K562 (cell line): ENCODE measurements at regions of chr15 and their contacts with region 1.

Region 1: DNA sequence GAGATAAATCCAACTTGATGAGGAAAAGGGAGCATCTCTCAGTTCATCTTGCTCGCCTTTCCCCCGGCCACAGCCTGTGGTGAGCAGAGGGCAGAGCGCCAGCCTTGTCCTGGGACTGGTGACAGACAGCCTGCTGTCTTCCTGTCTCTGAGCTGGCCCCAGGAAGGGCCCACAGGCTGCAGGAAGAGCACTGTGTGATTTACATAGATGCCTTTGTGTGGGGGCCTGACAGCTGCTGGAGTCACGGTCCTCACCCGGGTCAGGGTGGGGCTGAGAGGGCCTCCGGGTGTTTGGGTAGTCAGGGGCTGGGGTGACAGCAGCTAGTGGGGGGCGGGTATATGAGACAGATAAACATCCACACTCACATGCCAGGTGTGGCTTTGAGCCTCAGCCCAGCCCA is 29.3 kb downstream of the PLA2G4D start:
- DNase-seq: no peak
- ATAC-seq: no peak
- H3K4me3 ChIP-seq: no peak overlapping the region
- H3K27ac ChIP-seq: no peak overlapping the region
- H3K4me1 ChIP-seq: peaks cover 0 to 5% of the 10 kb centered on the region in 2 experiments; a peak in 1 of 5 replicates
- H3K27me3 ChIP-seq: peaks cover 7 to 71% of the 10 kb centered on the region in 2 experiments
- CTCF ChIP-seq: no peak
- EP300 ChIP-seq: no peak
- POLR2A ChIP-seq: no peak
- RAD21 ChIP-seq: no peak

Region 2: GRCh38 chr15:42084460-42085235 is 19.6 kb after region 1 on chr15:
- CTCF ChIA-PET with region 1: interaction called, 18 read pairs
- POLR2A ChIA-PET with region 1: no interaction called
- in situ Hi-C with region 1: no loop called
- intact Hi-C with region 1: loop called (anchors 1 kb)
- DNase-seq: peak; percentile 77 to 83 (median 80)
- ATAC-seq: peak; percentile 96
- H3K4me3 ChIP-seq: no peak overlapping the region
- H3K27ac ChIP-seq: no peak overlapping the region
- H3K4me1 ChIP-seq: peaks cover 0 to 20% of the 10 kb centered on the region in 2 experiments; a peak in 3 of 5 replicates
- H3K27me3 ChIP-seq: peaks cover 33 to 83% of the 10 kb centered on the region in 2 experiments
- CTCF ChIP-seq: peak; percentile 91 to 97 (median 91)
- EP300 ChIP-seq: no peak
- POLR2A ChIP-seq: no peak
- RAD21 ChIP-seq: peak; percentile 61 to 83